GM10248 (cell line): ENCODE measurements at regions of chr19 and their contacts with region 1.

Region 1: DNA sequence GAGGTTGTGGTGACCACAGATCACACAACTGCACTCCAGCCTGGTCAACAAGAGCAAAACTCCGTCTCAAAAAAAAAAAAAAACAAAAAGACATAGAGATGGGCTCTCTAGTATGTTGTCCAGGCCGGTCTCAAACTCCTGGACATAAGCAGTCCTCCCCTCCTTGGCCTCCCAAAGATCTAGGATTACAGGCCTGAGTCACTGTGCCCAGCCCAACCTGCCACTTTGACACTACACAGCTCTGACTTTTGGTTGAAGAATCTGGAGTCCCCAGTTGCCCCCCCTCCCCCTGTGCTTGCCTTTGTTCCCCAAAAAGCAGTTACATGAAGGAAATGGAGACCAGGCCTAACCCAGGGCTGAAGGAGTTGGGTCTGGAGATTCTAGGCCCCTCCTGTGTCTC is 12.9 kb downstream of the CARM1 start:
- DNase-seq: no peak
- CTCF ChIP-seq: no peak

Region 2: GRCh38 chr19:10870955-10871603 is 13.2 kb before region 1 on chr19 and contains the start of gene CARM1:
- CTCF ChIA-PET with region 1: interaction called, 28 read pairs
- POLR2A ChIA-PET with region 1: interaction called, 12 read pairs
- DNase-seq: peak; percentile 100
- CTCF ChIP-seq: peak; percentile 98

Region 3: GRCh38 chr19:10899151-10899653 is 14.9 kb after region 1 on chr19:
- CTCF ChIA-PET with region 1: interaction called, 11 read pairs
- POLR2A ChIA-PET with region 1: interaction called, 4 read pairs
- DNase-seq: no peak
- CTCF ChIP-seq: no peak

Region 4: GRCh38 chr19:11089254-11090053 is 205.2 kb after region 1 on chr19 and contains the start of gene LDLR:
- CTCF ChIA-PET with region 1: no interaction called
- POLR2A ChIA-PET with region 1: no interaction called
- DNase-seq: peak; percentile 80
- CTCF ChIP-seq: no peak